HCT116 (cell line): ENCODE measurements at regions of chr18 and their contacts with region 1.

Region 1: DNA sequence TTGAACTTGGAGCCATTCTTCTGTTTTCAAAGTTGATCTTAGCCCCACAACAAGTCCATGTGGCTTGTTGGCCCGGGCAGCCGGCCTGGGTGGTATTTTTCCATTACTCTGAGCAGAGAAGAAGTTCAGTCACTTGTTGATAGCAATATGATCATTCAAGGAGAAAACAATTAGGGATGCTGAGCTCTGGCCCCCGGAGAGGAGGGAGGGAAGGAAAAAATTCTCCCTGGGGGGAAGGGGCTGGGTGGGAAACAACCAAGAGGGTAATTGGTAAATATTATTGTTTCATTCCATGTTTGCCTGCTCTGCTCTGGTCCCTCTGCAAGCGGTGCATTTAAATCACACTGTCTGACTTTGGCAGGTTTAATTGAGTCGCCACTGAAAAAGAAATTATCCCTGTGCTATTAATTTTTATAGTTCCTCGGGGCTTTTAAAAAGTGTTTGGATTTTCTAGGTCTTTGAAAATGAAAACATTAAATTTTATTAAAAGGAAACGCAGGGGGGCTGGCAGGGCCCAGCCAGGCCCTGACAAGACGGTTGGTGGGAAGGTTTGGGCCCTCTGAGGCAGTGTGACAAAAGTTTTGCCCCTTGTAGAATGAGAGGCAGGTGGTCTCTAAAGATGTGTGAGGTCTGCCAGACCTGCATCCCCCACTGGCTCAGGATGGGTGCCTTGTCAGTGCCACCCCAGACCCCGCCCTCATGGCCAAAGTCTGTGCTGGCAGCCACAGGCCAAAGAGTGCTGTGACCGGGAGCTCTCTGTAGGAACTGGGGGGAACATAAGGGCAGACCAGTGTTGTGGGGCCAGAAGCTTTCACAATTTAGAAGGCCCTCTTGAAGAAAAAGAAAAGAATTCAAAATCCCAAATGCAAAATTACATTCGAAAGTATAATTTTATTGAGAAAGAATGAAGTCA is 52.5 kb upstream of the SLC14A2 start:
- DNase-seq: no peak
- ATAC-seq: no peak
- H3K4me3 ChIP-seq: no peak overlapping the region
- H3K27ac ChIP-seq: no peak overlapping the region
- H3K4me1 ChIP-seq: peaks cover 0 to 11% of the 10 kb centered on the region in 2 experiments; a peak in 2 of 4 replicates
- H3K27me3 ChIP-seq: no peaks in the 10 kb centered on the region
- CTCF ChIP-seq: no peak
- POLR2A ChIP-seq: no peak
- RAD21 ChIP-seq: no peak

Region 2: GRCh38 chr18:44589693-44590355 is 973.0 kb before region 1 on chr18:
- CTCF ChIA-PET with region 1: no interaction called
- POLR2A ChIA-PET with region 1: no interaction called
- RAD21 ChIA-PET with region 1: no interaction called
- intact Hi-C with region 1: no loop called
- DNase-seq: no peak
- ATAC-seq: no peak
- H3K4me3 ChIP-seq: no peak overlapping the region
- H3K27ac ChIP-seq: no peak overlapping the region
- H3K4me1 ChIP-seq: no peaks in the 10 kb centered on the region
- H3K27me3 ChIP-seq: no peaks in the 10 kb centered on the region
- CTCF ChIP-seq: no peak
- POLR2A ChIP-seq: no peak
- RAD21 ChIP-seq: no peak

Region 3: DNA sequence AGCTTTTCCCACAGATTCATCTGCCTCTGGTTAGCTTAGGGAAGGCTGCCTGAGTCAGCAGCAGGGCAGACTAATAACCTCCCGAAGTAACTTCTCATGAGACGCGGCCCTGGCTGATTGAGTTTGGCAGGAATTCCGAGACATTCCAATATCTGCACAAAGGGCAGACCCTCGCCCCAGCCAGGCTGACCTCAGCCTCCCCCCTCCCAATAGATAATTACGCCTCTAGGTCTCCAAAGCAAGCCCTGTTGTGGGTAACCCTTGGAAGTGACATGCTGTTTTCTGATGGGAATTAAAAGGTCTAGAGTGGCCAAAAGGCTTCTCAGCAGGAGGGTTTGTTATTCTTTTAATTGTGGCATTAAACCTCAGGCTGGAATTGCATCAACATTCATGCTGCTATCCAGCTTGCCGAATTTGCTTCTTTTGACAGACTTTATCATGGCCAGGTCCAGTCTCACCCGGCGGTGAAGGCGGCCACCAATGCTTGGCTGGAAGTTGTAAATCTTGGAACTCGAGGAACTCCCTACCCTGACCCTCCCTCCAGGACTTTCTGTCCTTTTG is 45.6 kb before region 1 on chr18:
- CTCF ChIA-PET with region 1: no interaction called
- POLR2A ChIA-PET with region 1: no interaction called
- RAD21 ChIA-PET with region 1: no interaction called
- intact Hi-C with region 1: loop called (anchors 5 kb)
- DNase-seq: no peak
- ATAC-seq: no peak
- H3K4me3 ChIP-seq: no peak overlapping the region
- H3K27ac ChIP-seq: no peak overlapping the region
- H3K4me1 ChIP-seq: no peaks in the 10 kb centered on the region
- H3K27me3 ChIP-seq: no peaks in the 10 kb centered on the region
- CTCF ChIP-seq: no peak
- POLR2A ChIP-seq: no peak
- RAD21 ChIP-seq: no peak